ENCODE measurements at regions of chr14 and their contacts with region 1.

Region 1: GRCh38 chr14:81903477-81903876 is 369.8 kb upstream of the SEL1L start:
- DNase-seq: no peak
- ATAC-seq: no peak

Region 2: DNA sequence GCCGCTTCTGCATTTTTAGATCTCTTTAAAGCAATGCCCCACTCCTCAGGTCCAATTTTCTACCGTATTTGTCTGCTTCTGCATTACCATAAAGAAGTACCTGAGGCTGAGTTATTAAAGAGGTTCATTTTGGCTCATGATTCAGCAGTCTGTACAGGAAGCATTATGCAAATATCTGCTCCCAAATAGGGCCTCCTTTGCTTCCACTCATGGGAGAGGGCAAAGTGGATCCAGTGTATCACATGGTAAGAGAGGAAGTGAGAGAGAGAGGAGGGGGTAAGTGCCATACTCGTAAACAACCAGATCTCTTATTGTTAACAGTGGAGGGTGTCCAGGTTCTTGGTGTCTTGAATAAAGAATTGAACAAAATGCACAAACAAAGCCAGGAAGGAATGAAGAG is 53.8 kb before region 1 on chr14:
- intact Hi-C with region 1: no loop called
- DNase-seq: no peak
- ATAC-seq: no peak

Region 3: GRCh38 chr14:81927070-81927469 is 23.6 kb after region 1 on chr14:
- intact Hi-C with region 1: no loop called
- DNase-seq: no peak
- ATAC-seq: no peak

Region 4: DNA sequence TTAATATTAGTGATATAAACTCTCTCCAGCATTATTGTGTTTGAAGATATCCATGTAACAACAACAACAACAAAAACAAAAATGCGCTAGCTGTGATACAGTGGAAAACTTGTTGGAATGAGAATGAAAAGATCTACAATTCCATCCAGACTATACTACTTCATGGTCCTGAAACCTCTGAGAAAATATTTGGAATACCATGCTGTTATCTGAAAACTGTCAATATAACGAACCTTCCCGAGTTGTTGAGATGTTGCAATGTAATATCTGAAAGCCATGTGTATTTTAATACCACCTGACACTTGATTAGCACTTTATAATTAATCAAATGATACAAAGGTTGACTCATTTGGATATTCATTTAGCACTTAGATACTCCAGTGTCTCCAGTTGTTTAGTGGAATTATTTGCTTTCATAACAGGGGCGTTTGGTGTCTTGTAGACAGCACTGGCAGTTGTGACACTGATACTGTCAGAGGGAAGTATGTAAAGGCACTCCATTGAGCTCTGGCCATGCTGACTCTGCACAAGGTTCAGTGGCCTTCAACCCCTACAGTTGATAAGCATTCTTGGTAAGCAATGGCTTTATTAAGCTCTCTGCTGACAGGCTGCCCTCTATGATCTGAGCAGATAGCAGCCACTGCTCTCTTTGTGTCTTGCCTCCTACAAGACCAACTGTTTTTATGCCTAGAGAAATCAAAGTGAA is 77.3 kb after region 1 on chr14:
- intact Hi-C with region 1: loop called (anchors 2 kb)
- DNase-seq: no peak
- ATAC-seq: no peak

Measured in sciatic nerve (tissue), 2 donors.